Activated T-helper 2 cell treated with anti-CD3 and anti-CD28 coated beads, Interferon-gamma antibody, Interleukin-2, Interleukin-4, amounts not matched to agents 10 μg/mL and 5 μg/mL and 100 μg/mL, durations not matched to agents 14 hours and 24 hours and 36 hours (primary cell): ENCODE measurements at regions of chr2 and their contacts with region 1.

Region 1: DNA sequence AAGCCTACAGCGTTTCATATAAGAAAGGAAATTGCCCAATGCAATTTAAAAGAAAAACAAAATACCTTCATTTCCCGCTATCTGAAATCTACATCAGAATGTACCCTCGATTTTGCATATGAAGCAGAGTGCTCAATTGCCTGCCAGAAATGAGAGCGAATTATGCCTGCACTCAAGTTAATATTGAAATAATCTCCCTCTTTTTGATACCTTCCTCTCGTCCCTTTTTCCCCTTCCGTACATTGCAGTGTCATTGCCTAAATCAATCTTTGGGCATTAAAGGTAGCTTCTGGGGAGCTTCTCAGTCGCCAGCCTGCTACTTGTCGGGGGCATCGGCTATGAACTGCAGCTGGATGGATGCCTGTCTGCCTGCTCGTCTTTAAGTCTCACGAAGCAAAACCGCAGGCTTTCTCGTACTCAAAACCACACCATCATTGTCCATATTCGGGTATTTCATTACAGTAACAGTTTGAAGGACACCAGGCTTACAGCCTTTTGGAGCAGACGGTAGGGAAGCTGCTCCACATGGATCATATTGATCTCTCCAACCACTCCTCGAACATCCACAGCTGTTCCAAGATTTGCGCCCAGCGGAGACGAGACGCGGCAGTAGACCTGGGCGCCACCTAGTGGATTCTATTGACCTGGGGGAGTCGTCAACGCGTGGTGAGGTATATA is 64.0 kb upstream of the HNRNPA3 start:
- DNase-seq: peak; percentile 65
- H3K4me3 Mint-ChIP-seq: peak overlapping the region; percentile 90
- H3K27ac Mint-ChIP-seq: no peak overlapping the region
- H3K4me1 Mint-ChIP-seq: peaks cover 15% of the 10 kb centered on the region
- H3K27me3 Mint-ChIP-seq: peaks cover 72% of the 10 kb centered on the region

Region 2: DNA sequence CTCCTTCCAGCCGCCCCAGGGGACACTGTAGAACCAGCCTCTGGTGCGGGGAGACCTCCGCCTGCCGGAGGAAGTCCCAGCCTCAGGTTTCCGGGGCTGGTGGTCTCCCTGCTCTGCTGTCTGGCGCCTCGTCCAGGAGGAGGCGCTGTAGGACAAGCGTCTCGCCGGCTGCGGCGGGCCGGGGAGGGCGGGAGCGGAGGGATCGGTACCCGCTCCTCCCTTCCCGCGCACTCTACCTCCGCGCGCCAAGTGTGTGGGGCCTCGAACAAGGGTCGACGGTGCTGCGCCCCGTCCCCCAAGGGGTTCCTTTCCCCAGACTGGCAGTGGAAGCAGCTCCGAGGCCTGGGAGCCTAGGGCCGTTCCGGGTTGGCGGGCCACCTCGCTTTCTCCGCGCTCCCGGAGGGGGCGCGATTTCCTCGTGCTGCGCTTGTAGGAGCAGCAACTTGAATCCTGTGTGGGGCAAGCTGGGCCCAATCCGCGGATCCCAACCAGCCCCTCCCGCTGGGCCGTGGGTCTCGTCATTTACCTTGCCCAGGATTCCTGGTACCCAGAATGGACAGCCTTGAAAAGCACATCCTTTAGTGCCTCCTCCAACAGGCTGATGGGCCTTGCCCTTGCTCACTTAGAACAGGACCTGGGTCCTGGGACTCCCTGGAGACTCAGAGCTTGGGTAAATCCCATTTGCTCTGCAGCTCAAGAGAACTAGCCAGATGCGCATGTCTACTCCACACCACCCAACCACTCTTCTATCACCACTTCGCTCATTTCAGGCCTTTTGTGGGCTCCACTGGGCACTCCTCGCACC is 1007.9 kb before region 1 on chr2:
- intact Hi-C with region 1: loop called (anchors 5 kb)
- DNase-seq: peak; percentile 64
- H3K4me3 Mint-ChIP-seq: no peak overlapping the region
- H3K27ac Mint-ChIP-seq: no peak overlapping the region
- H3K4me1 Mint-ChIP-seq: peaks cover 8% of the 10 kb centered on the region
- H3K27me3 Mint-ChIP-seq: peaks cover 80% of the 10 kb centered on the region

Region 3: DNA sequence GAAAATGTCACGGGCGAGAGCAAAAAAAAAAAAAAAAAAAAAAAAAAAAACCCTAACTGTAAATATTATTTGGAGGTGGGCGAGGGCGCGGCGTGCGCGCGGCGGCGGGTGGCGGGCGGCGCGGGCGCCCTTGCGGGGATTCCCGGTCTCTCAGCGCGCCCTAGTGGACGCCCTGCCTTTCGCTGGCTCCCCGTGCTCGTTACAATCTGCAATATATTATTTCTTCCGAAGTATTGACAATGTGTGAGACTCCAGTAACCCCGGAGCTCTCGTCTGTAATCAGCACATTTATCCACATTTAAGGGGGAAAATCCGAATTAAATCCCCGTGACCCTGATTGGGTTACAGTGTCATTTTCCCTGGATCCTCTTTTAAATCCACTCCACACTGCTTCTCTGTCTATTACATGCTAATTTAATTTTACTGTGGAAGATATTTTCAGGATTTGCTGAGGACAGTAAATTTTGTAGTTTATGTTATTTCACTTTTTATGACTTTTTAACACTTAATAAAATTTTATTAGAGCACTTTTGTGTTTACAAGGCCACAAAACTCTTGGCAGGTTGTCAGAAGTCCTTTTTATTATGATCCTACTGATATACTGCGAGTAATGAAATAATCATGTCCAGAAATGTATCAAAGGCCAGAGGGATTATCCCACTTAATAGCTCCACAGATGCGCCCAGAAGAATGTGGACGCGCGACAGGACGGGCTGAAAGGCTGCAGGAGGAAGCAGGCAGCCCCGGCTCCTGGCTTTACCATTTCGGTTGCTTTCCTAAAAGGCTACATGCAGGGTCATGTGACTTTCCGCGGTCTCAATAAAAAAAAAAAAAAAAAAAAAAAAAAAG is 510.2 kb before region 1 on chr2:
- intact Hi-C with region 1: loop called (anchors 2 kb)
- DNase-seq: peak; percentile 29
- H3K4me3 Mint-ChIP-seq: peak overlapping the region; percentile 61
- H3K27ac Mint-ChIP-seq: no peak overlapping the region
- H3K4me1 Mint-ChIP-seq: peaks cover 5% of the 10 kb centered on the region
- H3K27me3 Mint-ChIP-seq: peaks cover 60% of the 10 kb centered on the region

Region 4: DNA sequence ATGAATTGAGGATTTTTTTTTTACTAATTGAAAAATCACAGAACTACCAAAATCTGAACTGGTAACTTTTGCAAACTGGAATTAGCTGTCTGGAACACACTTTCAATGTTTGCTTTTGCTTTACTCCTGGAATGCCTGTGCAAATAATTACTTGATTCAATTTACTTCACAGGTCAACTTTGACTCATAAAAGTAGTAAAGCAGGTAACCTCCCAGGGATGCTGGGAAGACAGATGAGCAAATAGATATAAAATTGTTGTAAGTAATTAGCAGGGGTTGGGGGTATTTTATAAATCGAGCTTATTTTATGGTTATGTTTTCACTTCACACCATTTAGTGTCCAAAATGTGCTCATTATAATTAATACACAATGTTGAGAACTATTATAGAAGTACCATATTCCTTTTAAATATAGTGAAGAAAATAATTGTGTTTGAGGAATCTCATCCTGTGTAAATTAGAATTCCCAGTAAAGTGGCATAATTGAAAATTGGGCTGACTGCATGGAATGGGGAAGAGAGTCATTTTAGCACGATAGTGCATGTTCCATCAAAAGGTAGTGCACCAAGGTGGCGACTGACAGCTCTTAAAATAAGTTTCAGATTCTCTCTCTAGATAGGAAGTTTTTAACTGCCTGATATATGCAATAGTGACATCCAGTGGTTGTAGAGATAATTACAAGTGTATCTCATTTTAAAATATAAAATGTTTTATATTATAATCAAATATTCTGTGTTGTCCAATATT is 334.1 kb before region 1 on chr2:
- intact Hi-C with region 1: loop called (anchors 2 kb)
- DNase-seq: no peak
- H3K4me3 Mint-ChIP-seq: no peak overlapping the region
- H3K27ac Mint-ChIP-seq: no peak overlapping the region
- H3K4me1 Mint-ChIP-seq: peaks cover 4% of the 10 kb centered on the region
- H3K27me3 Mint-ChIP-seq: peaks cover 9% of the 10 kb centered on the region

Region 5: DNA sequence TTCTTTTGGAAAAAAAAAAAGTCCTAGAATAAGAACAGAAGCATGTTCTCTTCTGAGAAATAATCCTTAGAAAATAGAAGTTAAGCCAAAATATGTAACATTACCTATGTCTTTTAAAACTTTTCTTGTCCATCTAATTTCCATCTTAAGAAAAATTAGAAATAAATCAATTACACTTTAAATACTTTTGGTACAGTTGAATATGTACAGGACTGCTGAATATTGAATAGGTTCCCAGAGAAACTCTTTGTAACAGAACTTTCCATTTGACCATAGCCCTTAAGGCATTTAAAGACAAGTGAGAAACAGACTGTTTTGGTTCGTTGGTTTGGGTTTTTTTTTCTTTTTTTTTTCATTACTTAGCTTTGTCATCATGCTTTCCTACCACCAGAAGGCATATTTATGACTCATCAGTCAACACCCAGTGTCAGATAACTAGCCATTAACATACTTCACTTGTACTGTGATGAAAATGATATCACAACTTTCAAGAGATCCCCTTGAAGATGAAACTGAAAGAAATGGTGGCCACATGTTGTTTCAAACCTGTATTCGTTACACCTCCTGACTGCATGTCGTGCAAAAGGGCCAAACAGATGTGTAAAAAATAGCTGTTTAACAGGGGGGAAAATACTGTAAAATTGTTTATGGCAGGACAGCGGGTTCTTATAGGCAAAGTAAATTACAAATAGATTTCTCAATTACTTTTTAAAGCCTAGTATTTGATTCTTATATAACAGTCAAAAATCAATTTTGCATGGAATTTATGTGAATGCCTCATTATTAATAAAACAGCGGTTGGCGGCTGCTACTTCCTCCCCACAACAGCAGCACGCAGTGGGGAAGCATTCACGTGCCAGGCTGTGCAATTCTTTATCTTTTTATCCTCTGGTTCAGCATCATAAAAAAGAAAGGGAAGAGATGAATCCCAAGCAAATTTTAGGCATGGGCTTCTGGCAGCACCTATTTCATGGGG is 216.7 kb before region 1 on chr2:
- intact Hi-C with region 1: loop called (anchors 5 kb)
- DNase-seq: peak; percentile 31
- H3K4me3 Mint-ChIP-seq: no peak overlapping the region
- H3K27ac Mint-ChIP-seq: peak overlapping the region; percentile 93
- H3K4me1 Mint-ChIP-seq: peaks cover 28% of the 10 kb centered on the region
- H3K27me3 Mint-ChIP-seq: no peaks in the 10 kb centered on the region

Region 6: GRCh38 chr2:177183860-177184259 is 35.2 kb after region 1 on chr2:
- intact Hi-C with region 1: no loop called
- DNase-seq: no peak
- H3K4me3 Mint-ChIP-seq: no peak overlapping the region
- H3K27ac Mint-ChIP-seq: no peak overlapping the region
- H3K4me1 Mint-ChIP-seq: no peaks in the 10 kb centered on the region
- H3K27me3 Mint-ChIP-seq: peaks cover 24% of the 10 kb centered on the region